ENCODE measurements at regions of chr6 and their contacts with region 1.

Region 1: GRCh38 chr6:2791124-2791974 is 26.2 kb downstream of the WRNIP1 start:
- DNase-seq: peak; percentile 59
- ATAC-seq: peak; percentile 87

Region 2: DNA sequence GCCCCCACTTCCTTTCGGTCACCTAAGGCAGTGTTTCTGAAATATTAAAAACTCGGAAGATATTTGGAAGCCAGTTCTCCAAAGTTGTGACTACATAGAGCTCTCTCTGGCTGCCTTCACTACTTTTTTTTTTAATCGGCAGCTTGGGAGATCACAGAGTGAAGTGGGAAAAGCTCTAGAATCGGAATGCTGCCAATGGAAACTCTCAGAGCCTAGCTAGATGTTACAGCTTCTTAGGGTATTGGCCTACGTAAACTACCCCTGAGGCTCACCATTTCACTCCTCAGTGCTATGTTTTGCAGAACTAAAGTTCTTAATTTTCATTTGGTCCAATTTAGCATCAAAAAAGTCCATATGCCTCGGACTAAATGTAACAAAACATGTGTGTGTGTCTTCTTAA is 35.8 kb after region 1 on chr6:
- intact Hi-C with region 1: loop called (anchors 5 kb)
- DNase-seq: no peak
- ATAC-seq: peak; percentile 60

Region 3: GRCh38 chr6:2848851-2849250 is 57.5 kb after region 1 on chr6:
- intact Hi-C with region 1: loop called (anchors 5 kb)
- DNase-seq: no peak
- ATAC-seq: no peak

Region 4: GRCh38 chr6:2931970-2932748 is 140.8 kb after region 1 on chr6:
- intact Hi-C with region 1: loop called (anchors 5 kb)
- DNase-seq: peak; percentile 82
- ATAC-seq: peak; percentile 96

Region 5: DNA sequence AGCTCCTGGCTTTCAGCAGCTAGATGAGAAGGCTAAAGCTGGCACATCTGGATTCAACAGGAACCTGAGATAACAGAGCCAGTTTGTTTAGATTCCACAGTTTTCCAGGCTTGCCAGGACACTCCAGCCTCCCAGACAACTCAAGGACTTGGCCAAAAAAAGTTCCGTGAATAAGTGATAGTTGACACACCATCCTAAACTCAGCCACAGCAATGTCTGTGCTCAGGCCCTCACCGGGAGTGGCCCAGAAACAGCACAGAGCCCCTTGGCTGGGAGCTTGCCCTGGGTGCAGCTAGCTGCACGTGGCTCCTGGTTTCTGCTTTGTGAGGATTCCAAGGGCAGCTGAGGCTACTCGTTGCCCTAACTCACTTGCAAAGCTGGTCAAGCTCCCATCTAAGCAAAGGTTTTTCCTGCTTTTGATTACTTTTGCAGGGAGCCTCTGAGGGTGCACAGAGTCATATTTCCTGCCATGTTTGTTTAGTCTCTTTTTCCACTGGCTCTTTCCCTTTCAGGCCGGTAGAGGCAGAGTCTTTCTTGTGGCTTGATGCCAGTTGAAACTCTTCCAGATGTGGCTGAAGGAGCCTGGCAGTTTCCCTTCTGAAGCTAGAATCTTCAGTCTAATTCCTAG is 1462.4 kb after region 1 on chr6:
- intact Hi-C with region 1: no loop called
- DNase-seq: no peak
- ATAC-seq: peak; percentile 68

Measured in Right ventricle myocardium superior (tissue), 1 donor.